ENCODE measurements at regions of chr16 and their contacts with region 1.

Region 1: GRCh38 chr16:86865524-86866301 is 287.4 kb downstream of the FOXL1 start:
- DNase-seq: peak in 1 of 5 donors; percentile 24
- H3K4me3 ChIP-seq: no peak overlapping the region
- H3K27ac ChIP-seq: no peak overlapping the region
- H3K4me1 ChIP-seq: no peaks in the 10 kb centered on the region
- H3K27me3 ChIP-seq: no peaks in the 10 kb centered on the region
- CTCF ChIP-seq: no peak
- EP300 ChIP-seq: no peak
- POLR2A ChIP-seq: no peak

Region 2: DNA sequence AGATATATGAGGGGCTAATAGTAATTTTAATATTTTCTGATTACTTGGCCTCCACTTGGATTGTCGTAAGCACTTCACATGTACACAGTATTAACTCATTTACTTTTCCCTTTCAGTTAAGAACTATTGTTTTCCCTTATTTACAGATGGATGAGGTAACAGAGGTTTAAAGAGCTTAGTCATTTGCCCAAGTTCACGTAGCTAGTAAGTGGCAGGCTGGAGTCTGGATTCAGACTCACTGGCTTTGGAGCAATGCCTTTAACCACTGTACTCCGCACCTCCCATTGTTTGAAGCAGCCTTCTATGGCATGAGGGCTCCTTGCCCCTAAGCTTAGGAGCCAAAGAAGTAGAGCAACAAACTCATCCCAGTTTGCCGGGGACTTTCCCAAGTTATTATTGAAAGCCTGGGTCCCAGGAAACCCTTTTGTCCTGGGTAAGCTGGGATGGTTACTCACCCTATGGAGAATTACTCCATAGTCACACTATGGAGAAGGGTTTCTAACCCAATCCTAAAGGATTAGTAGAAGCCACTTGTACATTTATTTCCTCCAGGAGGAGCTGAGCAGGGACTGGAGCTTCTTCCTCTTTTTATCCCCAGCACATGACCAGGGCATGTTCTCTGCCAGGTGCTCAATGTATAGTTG is 275.1 kb before region 1 on chr16:
- intact Hi-C with region 1: loop called in 1 of 4 experiments (anchors 10 kb)
- DNase-seq: no peak
- H3K4me3 ChIP-seq: no peak overlapping the region
- H3K27ac ChIP-seq: no peak overlapping the region
- H3K4me1 ChIP-seq: no peaks in the 10 kb centered on the region
- H3K27me3 ChIP-seq: no peaks in the 10 kb centered on the region
- CTCF ChIP-seq: no peak
- EP300 ChIP-seq: no peak
- POLR2A ChIP-seq: no peak